Esophagus muscularis mucosa (tissue), 4 donors: ENCODE measurements at regions of chr15 and their contacts with region 1.

Region 1: GRCh38 chr15:73964736-73965093 is 27.4 kb downstream of the STOML1 start:
- DNase-seq: peak; percentile 99
- H3K4me3 ChIP-seq: no peak overlapping the region
- H3K27ac ChIP-seq: no peak overlapping the region
- H3K4me1 ChIP-seq: peaks cover 3 to 12% (median 10%) of the 10 kb centered on the region in 4 donors
- H3K27me3 ChIP-seq: no peaks in the 10 kb centered on the region
- CTCF ChIP-seq: peak; percentile 92 to 97 (median 96)
- EP300 ChIP-seq: no peak
- POLR2A ChIP-seq: no peak

Region 2: DNA sequence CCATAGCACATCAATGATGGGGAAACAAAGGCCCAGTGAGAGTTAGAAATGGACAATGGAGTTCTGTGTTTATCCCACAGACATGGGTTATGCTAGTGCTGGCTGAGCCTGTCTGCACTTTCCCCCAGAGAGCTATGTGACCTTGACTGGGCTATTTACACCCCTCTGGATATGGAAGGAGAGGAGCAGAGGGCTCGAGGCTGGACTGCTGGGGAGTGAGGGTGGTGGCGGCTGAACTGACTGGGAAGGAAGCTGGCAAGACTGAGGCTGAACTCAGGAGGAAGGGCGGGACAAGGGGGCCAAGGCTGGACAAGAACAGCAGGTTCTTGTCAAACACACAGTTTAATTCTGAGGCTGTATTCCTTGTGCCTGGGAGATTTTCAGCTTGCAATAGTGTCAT is 200.8 kb before region 1 on chr15:
- intact Hi-C with region 1: no loop called
- DNase-seq: no peak
- H3K4me3 ChIP-seq: no peak overlapping the region
- H3K27ac ChIP-seq: peak overlapping the region in 2 of 4 donors; percentile 5 to 15
- H3K4me1 ChIP-seq: peaks cover 6 to 25% (median 15%) of the 10 kb centered on the region in 4 donors
- H3K27me3 ChIP-seq: no peaks in the 10 kb centered on the region
- CTCF ChIP-seq: no peak
- EP300 ChIP-seq: no peak
- POLR2A ChIP-seq: no peak

Region 3: GRCh38 chr15:73818308-73818985 is 146.3 kb before region 1 on chr15:
- intact Hi-C with region 1: no loop called
- DNase-seq: no peak
- H3K4me3 ChIP-seq: no peak overlapping the region
- H3K27ac ChIP-seq: no peak overlapping the region
- H3K4me1 ChIP-seq: no peaks in the 10 kb centered on the region
- H3K27me3 ChIP-seq: no peaks in the 10 kb centered on the region
- CTCF ChIP-seq: no peak
- EP300 ChIP-seq: no peak
- POLR2A ChIP-seq: no peak

Region 4: GRCh38 chr15:73897441-73898261 is 67.1 kb before region 1 on chr15:
- intact Hi-C with region 1: loop called (anchors 2 kb)
- DNase-seq: no peak
- H3K4me3 ChIP-seq: no peak overlapping the region
- H3K27ac ChIP-seq: no peak overlapping the region
- H3K4me1 ChIP-seq: peaks cover 0 to 12% (median 10%) of the 10 kb centered on the region in 4 donors
- H3K27me3 ChIP-seq: no peaks in the 10 kb centered on the region
- CTCF ChIP-seq: peak; percentile 70 to 93 (median 78)
- EP300 ChIP-seq: no peak
- POLR2A ChIP-seq: no peak

Region 5: DNA sequence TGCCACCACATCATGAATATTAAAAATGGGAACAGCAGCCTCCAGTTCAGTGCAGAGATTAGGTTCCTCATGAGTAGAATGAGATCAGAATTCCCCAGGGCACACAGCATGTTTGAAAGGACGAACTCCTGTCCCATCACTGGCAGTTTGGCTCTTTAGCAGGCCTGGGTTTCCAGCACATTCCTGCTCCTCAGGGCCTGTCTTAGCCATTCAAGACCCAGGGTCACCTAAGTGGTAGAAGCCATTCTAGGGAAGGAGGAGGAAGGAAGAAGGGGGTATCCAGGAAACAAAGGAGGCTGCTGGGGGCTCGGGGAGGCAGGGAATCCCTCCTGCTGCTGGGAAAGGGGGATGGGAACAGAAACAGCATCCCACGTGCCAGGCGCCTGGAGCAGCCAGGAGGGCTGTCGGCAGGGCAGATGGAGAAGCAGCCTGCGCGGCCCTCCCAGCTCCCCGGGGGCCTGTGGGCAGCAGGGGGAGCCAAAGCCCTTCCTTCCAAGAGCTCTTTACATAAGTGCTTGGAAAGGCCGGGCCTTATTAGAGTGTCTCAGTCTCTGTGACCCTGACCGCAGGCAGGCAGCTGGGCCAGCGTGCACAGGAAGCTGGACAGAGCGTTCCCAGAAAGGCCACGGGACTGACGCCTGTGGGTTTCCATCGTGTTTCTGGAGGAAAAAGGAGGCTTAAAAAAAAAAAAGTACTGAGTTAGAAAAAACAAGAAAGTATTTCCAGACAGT is 13.7 kb before region 1 on chr15:
- intact Hi-C with region 1: loop called (anchors 1 kb)
- DNase-seq: peak; percentile 97
- H3K4me3 ChIP-seq: no peak overlapping the region
- H3K27ac ChIP-seq: peak overlapping the region; percentile 94 to 98 (median 96)
- H3K4me1 ChIP-seq: peaks cover 29 to 42% (median 39%) of the 10 kb centered on the region in 4 donors
- H3K27me3 ChIP-seq: no peaks in the 10 kb centered on the region
- CTCF ChIP-seq: peak; percentile 81 to 95 (median 92)
- EP300 ChIP-seq: no peak
- POLR2A ChIP-seq: no peak

Region 6: GRCh38 chr15:74123138-74123443 is 158.4 kb after region 1 on chr15:
- intact Hi-C with region 1: no loop called
- DNase-seq: no peak
- H3K4me3 ChIP-seq: no peak overlapping the region
- H3K27ac ChIP-seq: no peak overlapping the region
- H3K4me1 ChIP-seq: peaks cover 9 to 10% (median 9%) of the 10 kb centered on the region in 4 donors
- H3K27me3 ChIP-seq: peaks cover 0 to 75% (median 10%) of the 10 kb centered on the region in 4 donors
- CTCF ChIP-seq: no peak
- EP300 ChIP-seq: no peak
- POLR2A ChIP-seq: no peak